Calu3 (cell line): ENCODE measurements at regions of chr11 and their contacts with region 1.

Region 1: GRCh38 chr11:12110201-12110713 is at the start of gene MICAL2:
- DNase-seq: peak; percentile 95
- H3K4me3 Mint-ChIP-seq: peak within 1 kb of the TSS; percentile 85
- H3K27ac Mint-ChIP-seq: peak within 1 kb of the TSS; percentile 77
- H3K4me1 Mint-ChIP-seq: peaks cover 47% of the 10 kb centered on the region
- H3K27me3 Mint-ChIP-seq: no peaks in the 10 kb centered on the region
- CTCF ChIP-seq: no peak
- total RNA-seq, gene MICAL2: 191 and 202 TPM in 2 replicates

Region 2: DNA sequence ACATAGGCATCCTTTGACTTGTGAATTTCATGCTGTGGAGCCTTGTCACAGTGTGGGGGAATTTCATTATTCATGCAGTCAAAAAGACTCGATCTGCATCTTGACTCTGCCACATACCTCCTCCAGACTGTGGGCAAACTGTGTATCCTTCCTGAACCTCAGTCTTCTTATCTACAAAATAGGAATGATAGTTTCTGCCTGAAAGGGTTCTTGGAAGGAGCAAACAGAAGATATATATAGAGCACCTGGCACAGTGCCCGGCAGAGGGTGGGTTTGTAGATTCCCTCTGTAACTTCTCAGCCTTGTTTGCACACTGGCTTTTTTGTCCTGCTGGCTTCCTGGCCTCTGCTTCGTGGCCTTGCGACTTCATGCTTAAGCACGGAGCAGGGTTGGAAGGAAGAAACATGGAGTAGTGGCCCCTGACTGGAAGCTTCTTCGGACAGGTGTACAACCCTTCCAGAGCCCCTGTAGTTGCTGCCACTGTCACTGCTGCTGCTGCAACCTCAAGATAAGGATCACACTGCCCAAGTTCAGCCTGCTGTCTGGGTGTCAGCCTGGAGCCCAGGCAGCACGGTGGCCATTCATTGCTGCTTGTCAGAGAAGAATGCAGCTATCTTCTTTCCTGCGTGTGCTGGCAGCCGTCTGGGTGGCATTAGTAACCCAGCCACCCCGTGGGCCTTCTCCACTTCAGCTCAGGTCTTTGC is 106.6 kb after region 1 on chr11:
- CTCF ChIA-PET with region 1: no interaction called
- intact Hi-C with region 1: loop called (anchors 10 kb)
- DNase-seq: peak; percentile 44
- H3K4me3 Mint-ChIP-seq: no peak overlapping the region
- H3K27ac Mint-ChIP-seq: no peak overlapping the region
- H3K4me1 Mint-ChIP-seq: peaks cover 27% of the 10 kb centered on the region
- H3K27me3 Mint-ChIP-seq: no peaks in the 10 kb centered on the region
- CTCF ChIP-seq: no peak